Endothelial cell of umbilical vein (primary cell): ENCODE measurements at regions of chr3 and their contacts with region 1.

Region 1: GRCh38 chr3:192444096-192444790 is 283.1 kb downstream of the FGF12 start:
- DNase-seq: peak; percentile 78
- H3K4me3 ChIP-seq: no peak overlapping the region
- H3K27ac ChIP-seq: no peak overlapping the region
- H3K4me1 ChIP-seq: peaks cover 3% of the 10 kb centered on the region
- H3K27me3 ChIP-seq: peaks cover 15 to 35% of the 10 kb centered on the region in 2 experiments
- CTCF ChIP-seq: peak; percentile 96
- POLR2A ChIP-seq: no peak

Region 2: DNA sequence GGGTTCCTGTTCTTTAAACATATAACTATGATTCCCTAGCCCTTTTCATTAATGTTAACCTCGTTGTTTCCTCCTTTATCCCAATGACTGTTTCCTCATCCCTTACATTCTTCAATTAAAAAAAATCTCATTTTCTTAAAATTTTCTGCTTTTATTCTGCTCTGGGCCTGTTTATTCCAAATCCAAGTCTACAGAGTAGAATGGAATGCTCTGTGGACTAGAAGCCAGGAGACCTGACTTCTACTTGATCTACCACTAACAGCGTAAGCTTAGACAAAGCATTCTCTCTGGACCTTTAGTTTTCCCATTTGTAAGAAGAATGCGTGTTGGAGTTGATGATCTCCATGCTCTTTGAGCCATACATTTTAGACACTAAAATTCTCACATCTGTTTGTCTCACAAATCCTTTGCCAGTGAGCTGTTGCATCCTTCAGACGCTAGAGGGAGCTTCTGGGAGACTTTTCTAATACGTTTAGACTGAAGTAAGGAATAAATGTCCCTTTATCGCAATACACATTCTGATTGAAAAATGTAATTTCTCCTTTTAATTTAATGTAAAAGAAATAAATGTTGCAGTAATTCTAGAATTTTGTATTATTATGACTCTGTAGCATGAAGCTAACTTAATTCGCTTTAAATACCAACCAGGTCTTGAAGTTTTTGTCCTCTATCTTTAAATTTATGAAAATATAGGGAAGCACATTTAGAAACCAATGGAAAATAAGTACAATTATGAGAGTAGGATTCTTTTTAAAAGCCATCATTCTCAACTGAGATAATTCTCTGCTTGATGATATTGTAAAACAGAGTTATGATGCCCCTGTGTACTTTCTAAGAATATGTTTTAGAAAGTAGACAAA is 1560.0 kb before region 1 on chr3:
- CTCF ChIA-PET with region 1: interaction called, 44 read pairs
- POLR2A ChIA-PET with region 1: no interaction called
- dilution Hi-C with region 1: no loop called
- intact Hi-C with region 1: loop called (anchors 1 kb)
- DNase-seq: peak; percentile 64
- H3K4me3 ChIP-seq: no peak overlapping the region
- H3K27ac ChIP-seq: no peak overlapping the region
- H3K4me1 ChIP-seq: no peaks in the 10 kb centered on the region
- H3K27me3 ChIP-seq: no peaks in the 10 kb centered on the region
- CTCF ChIP-seq: peak; percentile 77 to 78
- POLR2A ChIP-seq: no peak

Region 3: GRCh38 chr3:191412759-191413158 is 1031.5 kb before region 1 on chr3:
- CTCF ChIA-PET with region 1: interaction called, 28 read pairs
- POLR2A ChIA-PET with region 1: no interaction called
- dilution Hi-C with region 1: no loop called
- intact Hi-C with region 1: loop called (anchors 1 kb)
- DNase-seq: peak; percentile 97
- H3K4me3 ChIP-seq: no peak overlapping the region
- H3K27ac ChIP-seq: peak overlapping the region; percentile 25
- H3K4me1 ChIP-seq: peaks cover 11% of the 10 kb centered on the region
- H3K27me3 ChIP-seq: no peaks in the 10 kb centered on the region
- CTCF ChIP-seq: no peak
- POLR2A ChIP-seq: no peak

Region 4: DNA sequence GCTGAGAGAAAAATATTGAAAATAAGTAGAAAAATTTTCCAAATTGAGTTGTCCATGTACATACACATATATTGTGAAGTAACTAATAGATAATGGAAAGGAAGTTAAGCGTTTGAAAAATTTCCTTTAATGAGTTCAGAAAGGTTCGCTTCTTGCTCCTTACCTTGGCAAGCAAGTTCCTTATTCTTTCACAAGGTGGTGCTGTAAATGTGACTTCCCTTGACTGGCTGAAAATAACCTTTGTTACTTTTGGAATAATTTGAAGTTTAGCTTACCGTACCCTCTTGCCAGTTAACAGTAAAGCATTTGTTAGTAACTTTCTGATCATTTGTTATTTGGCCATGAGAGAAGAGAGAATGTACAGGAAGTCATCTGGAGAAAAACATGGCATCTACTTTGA is 941.7 kb before region 1 on chr3:
- CTCF ChIA-PET with region 1: interaction called, 7 read pairs
- POLR2A ChIA-PET with region 1: no interaction called
- dilution Hi-C with region 1: no loop called
- intact Hi-C with region 1: loop called (anchors 1 kb)
- DNase-seq: peak; percentile 5
- H3K4me3 ChIP-seq: no peak overlapping the region
- H3K27ac ChIP-seq: no peak overlapping the region
- H3K4me1 ChIP-seq: no peaks in the 10 kb centered on the region
- H3K27me3 ChIP-seq: peaks cover 0 to 4% of the 10 kb centered on the region in 2 experiments
- CTCF ChIP-seq: peak in 1 of 2 donors; percentile 9
- POLR2A ChIP-seq: no peak

Region 5: GRCh38 chr3:192183109-192183508 is 261.1 kb before region 1 on chr3:
- CTCF ChIA-PET with region 1: interaction called, 101 read pairs
- POLR2A ChIA-PET with region 1: no interaction called
- dilution Hi-C with region 1: no loop called
- intact Hi-C with region 1: loop called (anchors 1 kb)
- DNase-seq: no peak
- H3K4me3 ChIP-seq: no peak overlapping the region
- H3K27ac ChIP-seq: no peak overlapping the region
- H3K4me1 ChIP-seq: peaks cover 13% of the 10 kb centered on the region
- H3K27me3 ChIP-seq: no peaks in the 10 kb centered on the region
- CTCF ChIP-seq: no peak
- POLR2A ChIP-seq: no peak

Region 6: DNA sequence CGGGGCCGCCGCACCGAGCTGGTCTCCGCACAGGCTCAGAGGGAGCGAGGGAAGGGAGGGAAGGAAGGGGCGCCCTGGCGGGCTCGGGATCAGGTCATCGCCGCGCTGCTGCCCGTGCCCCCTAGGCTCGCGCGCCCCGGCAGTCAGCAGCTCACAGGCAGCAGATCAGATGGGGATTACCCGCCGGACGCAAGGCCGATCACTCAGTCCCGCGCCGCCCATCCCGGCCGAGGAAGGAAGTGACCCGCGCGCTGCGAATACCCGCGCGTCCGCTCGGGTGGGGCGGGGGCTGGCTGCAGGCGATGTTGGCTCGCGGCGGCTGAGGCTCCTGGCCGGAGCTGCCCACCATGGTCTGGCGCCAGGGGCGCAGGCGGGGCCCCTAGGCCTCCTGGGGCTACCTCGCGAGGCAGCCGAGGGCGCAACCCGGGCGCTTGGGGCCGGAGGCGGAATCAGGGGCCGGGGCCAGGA is 34.9 kb before region 1 on chr3:
- CTCF ChIA-PET with region 1: interaction called, 11 read pairs
- POLR2A ChIA-PET with region 1: interaction called, 3 read pairs
- dilution Hi-C with region 1: no loop called
- intact Hi-C with region 1: no loop called
- DNase-seq: peak; percentile 57
- H3K4me3 ChIP-seq: peak overlapping the region; percentile 51 to 78 (median 63)
- H3K27ac ChIP-seq: no peak overlapping the region
- H3K4me1 ChIP-seq: peaks cover 20% of the 10 kb centered on the region
- H3K27me3 ChIP-seq: peaks cover 0 to 3% of the 10 kb centered on the region in 2 experiments
- CTCF ChIP-seq: no peak
- POLR2A ChIP-seq: no peak